SK-N-SH (cell line): ENCODE measurements at regions of chr14 and their contacts with region 1.

Region 1: GRCh38 chr14:64764641-64765520 is 60.7 kb downstream of the PLEKHG3 start:
- DNase-seq: peak; percentile 90
- H3K4me3 ChIP-seq: peak overlapping the region; percentile 22 to 56; a peak in 1 of 4 replicates
- H3K27ac ChIP-seq: peak overlapping the region in 1 of 2 experiments; percentile 99; a peak in 2 of 4 replicates
- H3K4me1 ChIP-seq: peaks cover 26 to 56% of the 10 kb centered on the region in 2 experiments
- H3K27me3 ChIP-seq: no peaks in the 10 kb centered on the region
- CTCF ChIP-seq: peak; percentile 81
- EP300 ChIP-seq: no peak
- RAD21 ChIP-seq: peak; percentile 87

Region 2: DNA sequence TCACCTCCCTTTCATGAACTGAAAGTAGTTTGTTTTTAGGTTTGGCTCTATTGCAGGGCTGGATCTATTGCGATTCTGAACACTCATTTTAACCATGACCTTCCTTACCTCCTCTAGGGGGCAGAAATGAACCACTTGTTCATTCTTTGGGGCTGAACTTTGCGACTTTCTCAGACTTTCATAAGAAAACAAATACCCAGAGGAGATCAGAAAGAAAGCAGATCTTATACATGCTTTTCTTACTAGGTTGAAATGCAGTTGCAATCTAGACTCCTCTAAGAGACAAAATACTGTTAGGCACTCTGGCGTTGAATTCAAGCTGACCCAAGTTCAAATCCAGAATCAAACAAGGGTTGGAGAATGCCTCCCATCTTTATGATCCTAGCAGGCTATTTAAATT is 93.3 kb before region 1 on chr14:
- CTCF ChIA-PET with region 1: interaction called, 71 read pairs
- POLR2A ChIA-PET with region 1: interaction called, 6 read pairs
- DNase-seq: peak; percentile 69
- H3K4me3 ChIP-seq: no peak overlapping the region; a peak in 1 of 4 replicates
- H3K27ac ChIP-seq: no peak overlapping the region
- H3K4me1 ChIP-seq: no peaks in the 10 kb centered on the region; a peak in 1 of 4 replicates
- H3K27me3 ChIP-seq: no peaks in the 10 kb centered on the region
- CTCF ChIP-seq: peak; percentile 81
- EP300 ChIP-seq: no peak
- RAD21 ChIP-seq: peak; percentile 91

Region 3: DNA sequence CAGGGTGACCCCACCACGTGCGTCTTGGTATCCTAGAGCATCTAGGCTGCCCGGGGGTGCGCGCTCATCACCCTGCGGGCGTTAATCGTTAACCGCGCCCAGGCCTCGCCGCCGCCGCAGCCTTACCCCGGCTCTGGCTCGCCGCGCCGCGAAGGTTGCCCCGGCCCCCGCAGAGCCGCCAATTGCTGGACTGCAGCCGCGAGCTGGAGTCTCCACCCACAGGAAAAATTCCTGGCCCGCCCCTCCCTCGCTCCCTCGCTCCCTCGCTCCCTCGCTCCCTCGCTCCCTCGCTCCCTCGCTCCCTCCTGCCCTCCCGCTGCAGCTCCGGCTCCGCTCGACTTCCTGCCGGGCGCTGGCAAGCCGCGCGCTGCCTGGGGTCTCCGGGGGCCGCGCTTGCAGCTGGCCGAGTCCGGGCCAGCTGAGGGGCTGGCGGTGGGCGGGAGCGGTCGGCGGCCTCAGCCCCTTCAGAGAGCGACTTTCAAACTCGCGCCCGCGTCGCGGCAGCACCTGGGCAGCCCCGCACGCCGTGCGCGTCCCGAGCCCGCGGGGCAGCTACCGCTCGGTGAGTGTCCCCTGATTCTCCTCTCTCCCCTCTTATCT is 60.6 kb before region 1 on chr14 and contains the start of gene PLEKHG3:
- CTCF ChIA-PET with region 1: interaction called, 13 read pairs
- POLR2A ChIA-PET with region 1: interaction called, 15 read pairs
- DNase-seq: peak; percentile 91
- H3K4me3 ChIP-seq: peak within 1 kb of the TSS; percentile 90 to 97
- H3K27ac ChIP-seq: peak within 1 kb of the TSS; percentile 30 to 71
- H3K4me1 ChIP-seq: peaks cover 6 to 36% of the 10 kb centered on the region in 2 experiments; a peak in 2 of 4 replicates
- H3K27me3 ChIP-seq: no peaks in the 10 kb centered on the region; the same call in 1 of the 2 replicates
- CTCF ChIP-seq: no peak
- EP300 ChIP-seq: no peak
- RAD21 ChIP-seq: no peak
- polyA plus RNA-seq, gene PLEKHG3: 4.9 and 5.1 TPM in 2 replicates

Region 4: GRCh38 chr14:64748995-64749763 is 15.7 kb before region 1 on chr14:
- CTCF ChIA-PET with region 1: interaction called, 16 read pairs
- POLR2A ChIA-PET with region 1: no interaction called
- DNase-seq: no peak
- H3K4me3 ChIP-seq: no peak overlapping the region
- H3K27ac ChIP-seq: no peak overlapping the region; a peak in 1 of 4 replicates
- H3K4me1 ChIP-seq: no peaks in the 10 kb centered on the region
- H3K27me3 ChIP-seq: no peaks in the 10 kb centered on the region
- CTCF ChIP-seq: no peak
- EP300 ChIP-seq: no peak
- RAD21 ChIP-seq: no peak

Region 5: GRCh38 chr14:64800000-64800399 is 35.1 kb after region 1 on chr14:
- CTCF ChIA-PET with region 1: interaction called, 19 read pairs
- POLR2A ChIA-PET with region 1: interaction called, 6 read pairs
- DNase-seq: peak; percentile 50
- H3K4me3 ChIP-seq: no peak overlapping the region
- H3K27ac ChIP-seq: no peak overlapping the region
- H3K4me1 ChIP-seq: peaks cover 2 to 27% of the 10 kb centered on the region in 2 experiments
- H3K27me3 ChIP-seq: no peaks in the 10 kb centered on the region
- CTCF ChIP-seq: peak; percentile 75
- EP300 ChIP-seq: no peak
- RAD21 ChIP-seq: peak; percentile 22; the same call in 1 of the 2 replicates